ENCODE measurements at regions of chr6 and their contacts with region 1.

Region 1: GRCh38 chr6:4928426-4928825 is 75.4 kb downstream of the RPP40 start:
- DNase-seq: no peak
- ATAC-seq: no peak
- H3K4me3 ChIP-seq: no peak overlapping the region
- H3K4me3 Mint-ChIP-seq: no peak overlapping the region
- H3K27ac ChIP-seq: no peak overlapping the region
- H3K27ac Mint-ChIP-seq: no peak overlapping the region
- H3K4me1 ChIP-seq: no peaks in the 10 kb centered on the region
- H3K4me1 Mint-ChIP-seq: peaks cover 67% of the 10 kb centered on the region
- H3K27me3 ChIP-seq: no peaks in the 10 kb centered on the region
- H3K27me3 Mint-ChIP-seq: no peaks in the 10 kb centered on the region
- CTCF ChIP-seq: no peak

Region 2: DNA sequence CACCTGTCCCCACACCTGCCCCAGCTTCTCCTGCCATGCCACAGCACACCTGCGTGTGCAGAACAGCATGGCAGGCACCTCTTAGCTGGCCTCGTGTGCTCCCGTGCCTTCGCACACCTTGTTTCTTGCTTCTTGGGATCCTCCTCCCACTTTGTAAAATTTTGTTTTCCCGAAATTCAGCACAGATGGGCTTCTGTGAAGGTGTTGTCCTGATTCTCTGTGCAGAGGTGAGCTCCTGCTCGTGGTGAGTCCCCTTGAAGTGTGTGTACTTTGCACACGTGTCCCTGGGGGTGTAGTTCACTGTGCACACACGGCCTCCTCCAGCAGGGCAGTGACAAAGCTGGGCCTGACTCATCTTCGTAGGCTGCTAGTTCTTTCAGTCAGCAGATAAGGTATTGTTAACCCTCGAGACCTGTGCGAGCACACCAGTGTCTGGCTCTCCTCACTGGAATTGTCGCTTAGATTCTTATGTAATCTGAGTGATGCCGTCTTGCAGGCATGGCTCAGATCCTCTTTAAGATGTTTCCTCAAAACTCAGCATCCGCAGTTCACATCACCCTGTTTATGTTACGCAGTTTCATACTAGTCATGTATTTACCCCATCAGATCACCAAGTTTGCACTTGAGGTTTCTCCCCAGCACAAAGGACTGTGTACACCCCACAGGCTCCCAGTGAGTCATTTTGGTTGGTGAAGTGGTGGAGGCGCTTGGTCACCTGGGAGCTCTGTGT is 74.5 kb before region 1 on chr6:
- CTCF ChIA-PET with region 1: no interaction called
- POLR2A ChIA-PET with region 1: no interaction called
- intact Hi-C with region 1: no loop called
- DNase-seq: no peak
- ATAC-seq: no peak
- H3K4me3 ChIP-seq: no peak overlapping the region
- H3K4me3 Mint-ChIP-seq: no peak overlapping the region
- H3K27ac ChIP-seq: no peak overlapping the region
- H3K27ac Mint-ChIP-seq: no peak overlapping the region
- H3K4me1 ChIP-seq: peaks cover 10% of the 10 kb centered on the region
- H3K4me1 Mint-ChIP-seq: peaks cover 88% of the 10 kb centered on the region
- H3K27me3 ChIP-seq: no peaks in the 10 kb centered on the region
- H3K27me3 Mint-ChIP-seq: no peaks in the 10 kb centered on the region
- CTCF ChIP-seq: no peak

Region 3: GRCh38 chr6:4906293-4907276 is 21.8 kb before region 1 on chr6:
- CTCF ChIA-PET with region 1: no interaction called
- POLR2A ChIA-PET with region 1: no interaction called
- intact Hi-C with region 1: loop called in 1 of 2 experiments (anchors 2 kb)
- DNase-seq: peak in 1 of 14 experiments; percentile 15
- ATAC-seq: no peak
- H3K4me3 ChIP-seq: peak overlapping the region; percentile 12
- H3K4me3 Mint-ChIP-seq: peak overlapping the region; percentile 20
- H3K27ac ChIP-seq: no peak overlapping the region
- H3K27ac Mint-ChIP-seq: peak overlapping the region; percentile 30
- H3K4me1 ChIP-seq: peaks cover 15% of the 10 kb centered on the region
- H3K4me1 Mint-ChIP-seq: peaks cover 52% of the 10 kb centered on the region
- H3K27me3 ChIP-seq: no peaks in the 10 kb centered on the region
- H3K27me3 Mint-ChIP-seq: no peaks in the 10 kb centered on the region
- CTCF ChIP-seq: no peak

Region 4: DNA sequence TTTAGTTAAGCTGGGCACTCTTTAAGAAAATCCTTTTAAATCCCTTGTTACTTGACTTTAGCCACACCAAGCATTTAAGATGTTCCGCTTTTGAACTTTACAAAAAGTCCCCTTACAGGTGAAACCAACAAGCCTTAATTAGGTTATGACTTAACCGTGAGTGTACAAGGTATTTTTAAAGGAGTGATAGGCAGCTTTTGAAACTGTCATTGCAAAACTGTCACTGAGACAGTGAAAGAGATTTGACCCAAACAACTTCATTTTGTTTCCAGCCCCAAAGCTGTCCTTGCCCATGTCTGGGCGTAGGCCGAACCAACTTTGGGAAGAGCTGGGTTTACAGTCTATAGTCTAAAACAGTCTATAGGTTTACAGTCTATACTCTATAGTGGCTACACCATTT is 638.3 kb after region 1 on chr6:
- CTCF ChIA-PET with region 1: no interaction called
- POLR2A ChIA-PET with region 1: no interaction called
- intact Hi-C with region 1: no loop called
- DNase-seq: no peak
- ATAC-seq: no peak
- H3K4me3 ChIP-seq: no peak overlapping the region
- H3K4me3 Mint-ChIP-seq: no peak overlapping the region
- H3K27ac ChIP-seq: no peak overlapping the region
- H3K27ac Mint-ChIP-seq: no peak overlapping the region
- H3K4me1 ChIP-seq: no peaks in the 10 kb centered on the region
- H3K4me1 Mint-ChIP-seq: peaks cover 11% of the 10 kb centered on the region
- H3K27me3 ChIP-seq: no peaks in the 10 kb centered on the region
- H3K27me3 Mint-ChIP-seq: no peaks in the 10 kb centered on the region
- CTCF ChIP-seq: no peak